PC-9 (cell line): ENCODE measurements at regions of chr13 and their contacts with region 1.

Region 1: GRCh38 chr13:114281351-114282040 is at the start of gene UPF3A:
- DNase-seq: peak; percentile 76 to 91
- H3K4me3 ChIP-seq: peak within 1 kb of the TSS; percentile 77
- H3K27ac ChIP-seq: peak within 1 kb of the TSS; percentile 91
- H3K4me1 ChIP-seq: peaks cover 28% of the 10 kb centered on the region
- H3K27me3 ChIP-seq: no peaks in the 10 kb centered on the region
- CTCF ChIP-seq: no peak
- total RNA-seq, gene UPF3A: 54.1 and 67.0 TPM in 2 replicates

Region 2: DNA sequence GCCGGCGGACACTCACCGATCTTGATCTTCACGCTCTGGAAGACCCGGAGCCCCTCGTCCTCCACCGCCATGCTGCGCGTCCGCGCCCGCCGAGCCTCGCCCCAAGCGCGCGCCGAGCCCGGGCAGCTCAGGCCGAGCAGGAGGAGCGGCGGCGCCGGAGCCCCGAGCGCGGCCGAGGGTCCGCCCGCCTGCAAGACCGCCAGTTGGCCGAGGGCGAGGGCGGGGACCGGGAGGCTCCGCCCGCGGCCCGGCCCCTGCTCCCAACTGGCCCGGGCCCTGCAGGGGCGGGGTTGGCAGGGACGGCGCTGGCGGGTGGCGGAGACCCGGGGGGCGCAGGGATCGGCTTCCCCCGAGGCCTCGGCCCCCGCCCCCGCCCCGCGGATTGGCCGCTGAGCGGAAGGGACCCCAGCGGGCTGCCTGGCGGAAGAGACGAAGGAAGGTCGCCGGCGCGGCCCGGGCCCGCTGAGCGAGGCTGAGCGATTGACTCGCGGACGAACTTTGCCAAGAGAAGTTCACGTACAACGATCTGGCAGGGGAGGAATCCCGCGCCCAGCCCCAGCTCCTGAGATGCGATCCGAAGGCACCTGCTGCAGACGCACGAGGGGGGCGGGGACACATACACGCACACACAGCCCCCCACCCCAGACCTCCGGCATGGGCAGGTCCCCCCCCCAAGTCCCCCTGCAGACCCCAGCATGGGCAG is 148.9 kb before region 1 on chr13 and contains the start of gene RASA3:
- CTCF ChIA-PET with region 1: no interaction called
- POLR2A ChIA-PET with region 1: no interaction called
- intact Hi-C with region 1: no loop called
- DNase-seq: peak; percentile 49 to 76
- H3K4me3 ChIP-seq: peak within 1 kb of the TSS; percentile 78
- H3K27ac ChIP-seq: no peak within 1 kb of the TSS
- H3K4me1 ChIP-seq: peaks cover 16% of the 10 kb centered on the region
- H3K27me3 ChIP-seq: no peaks in the 10 kb centered on the region
- CTCF ChIP-seq: no peak
- total RNA-seq, gene RASA3: 9.7 and 10.0 TPM in 2 replicates

Region 3: DNA sequence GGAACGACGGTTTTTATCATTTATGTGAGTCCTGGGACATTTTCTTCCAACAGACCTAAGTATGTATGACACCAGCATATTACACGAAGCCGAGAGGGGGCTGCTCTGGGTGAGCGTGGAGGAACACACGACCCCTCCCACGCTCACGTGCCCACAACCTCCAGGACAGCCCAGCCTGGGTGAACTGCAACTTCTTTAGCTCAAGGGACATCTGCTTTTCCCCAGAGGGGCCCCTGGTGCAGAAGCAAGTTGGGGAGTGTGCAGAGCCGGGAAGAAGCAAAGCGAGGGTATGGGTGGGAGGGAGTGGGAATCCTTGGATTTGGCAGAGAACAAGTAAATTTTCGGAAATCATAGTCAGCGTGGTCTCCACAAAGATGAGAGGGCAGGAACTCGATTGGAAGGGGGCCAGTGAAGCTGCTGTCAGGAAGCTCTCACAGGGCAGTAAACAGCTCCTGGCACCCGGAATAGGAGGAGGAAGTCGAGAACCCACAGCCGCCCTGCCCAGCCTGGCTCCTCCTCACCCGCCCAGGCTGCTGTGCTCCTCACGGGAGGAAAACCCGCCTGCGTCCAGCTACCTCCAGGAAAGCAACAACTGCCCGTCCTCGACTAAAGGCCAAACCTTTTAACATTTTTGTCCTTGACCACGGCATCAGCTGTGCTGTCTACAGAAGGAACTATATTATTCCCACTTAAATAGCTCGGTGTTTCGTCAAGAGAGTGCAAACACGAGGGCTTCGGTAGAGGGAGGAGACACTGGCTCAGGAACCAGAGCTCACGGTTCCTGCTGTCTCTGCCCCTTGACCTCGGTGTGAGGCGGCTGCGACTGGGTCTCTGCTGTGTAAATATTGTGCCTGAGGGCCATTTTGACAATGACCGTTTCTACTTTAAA is 119.6 kb before region 1 on chr13:
- CTCF ChIA-PET with region 1: no interaction called
- POLR2A ChIA-PET with region 1: no interaction called
- intact Hi-C with region 1: no loop called
- DNase-seq: peak in 1 of 2 experiments; percentile 16
- H3K4me3 ChIP-seq: peak overlapping the region; percentile 23; the same call in 1 of the 2 replicates
- H3K27ac ChIP-seq: no peak overlapping the region
- H3K4me1 ChIP-seq: 0 out of 2 replicates have a peak, but pooled peaks cover 9% of the 10 kb centered on the region
- H3K27me3 ChIP-seq: peaks cover 33% of the 10 kb centered on the region; the same call in 1 of the 2 replicates
- CTCF ChIP-seq: no peak

Region 4: DNA sequence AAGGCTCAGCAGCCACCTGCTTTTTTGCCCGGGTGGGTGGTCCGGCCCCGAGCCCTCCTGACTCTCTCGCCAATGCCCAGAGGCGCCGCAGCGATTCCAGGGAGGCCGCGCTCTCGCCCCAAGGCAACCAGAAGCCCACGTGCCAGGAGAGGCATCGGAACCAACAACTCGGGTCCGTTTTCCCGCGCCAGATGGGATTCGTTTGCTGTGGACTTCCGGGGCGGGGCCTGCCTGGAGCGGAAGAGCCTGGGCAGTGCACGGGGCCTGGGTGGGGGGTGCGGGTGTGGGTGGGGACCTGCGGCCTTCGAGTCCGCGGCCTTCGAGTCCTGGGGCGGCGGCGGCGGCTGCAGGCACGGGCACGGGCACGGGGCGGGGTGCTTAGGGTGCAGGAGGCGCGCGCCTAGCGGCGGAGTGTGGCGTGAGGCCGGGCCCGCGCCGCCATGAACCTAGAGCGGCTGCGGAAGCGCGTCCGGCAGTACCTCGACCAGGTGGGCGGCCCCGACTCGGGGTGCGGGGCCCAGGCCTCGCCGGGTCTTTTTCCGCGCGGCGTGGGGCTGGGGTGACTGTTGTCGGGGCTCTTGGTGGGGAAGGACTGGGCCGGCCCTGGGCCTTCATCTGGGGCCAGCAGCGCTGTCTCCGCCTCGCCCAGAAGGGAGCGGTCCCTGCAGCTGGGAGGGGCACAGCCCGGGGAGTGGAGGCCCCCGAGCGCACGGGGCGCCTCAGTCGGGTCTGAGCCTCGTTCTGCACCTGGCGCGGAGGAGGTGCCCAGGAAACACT is 46.7 kb before region 1 on chr13 and contains the start of gene CDC16:
- CTCF ChIA-PET with region 1: no interaction called
- POLR2A ChIA-PET with region 1: no interaction called
- intact Hi-C with region 1: loop called (anchors 1 kb)
- DNase-seq: peak; percentile 84 to 87
- H3K4me3 ChIP-seq: peak within 1 kb of the TSS; percentile 89
- H3K27ac ChIP-seq: peak within 1 kb of the TSS; percentile 61
- H3K4me1 ChIP-seq: peaks cover 18% of the 10 kb centered on the region
- H3K27me3 ChIP-seq: 0 out of 2 replicates have a peak, but pooled peaks cover 3% of the 10 kb centered on the region
- CTCF ChIP-seq: no peak
- total RNA-seq, gene CDC16: 45.7 and 56.8 TPM in 2 replicates

Region 5: GRCh38 chr13:114269281-114269770 is 12.2 kb before region 1 on chr13:
- CTCF ChIA-PET with region 1: no interaction called
- POLR2A ChIA-PET with region 1: interaction called, 11 read pairs
- intact Hi-C with region 1: no loop called
- DNase-seq: no peak
- H3K4me3 ChIP-seq: no peak overlapping the region
- H3K27ac ChIP-seq: no peak overlapping the region
- H3K4me1 ChIP-seq: no peaks in the 10 kb centered on the region
- H3K27me3 ChIP-seq: no peaks in the 10 kb centered on the region
- CTCF ChIP-seq: no peak